SK-N-SH (cell line): ENCODE measurements at regions of chr2 and their contacts with region 1.

Region 1: GRCh38 chr2:55175254-55176025 is 56.7 kb downstream of the CLHC1 start:
- DNase-seq: peak; percentile 45
- H3K4me3 ChIP-seq: no peak overlapping the region
- H3K27ac ChIP-seq: no peak overlapping the region
- H3K4me1 ChIP-seq: peaks cover 0 to 3% of the 10 kb centered on the region in 2 experiments; a peak in 3 of 4 replicates
- H3K27me3 ChIP-seq: no peaks in the 10 kb centered on the region
- CTCF ChIP-seq: peak; percentile 77
- EP300 ChIP-seq: no peak
- RAD21 ChIP-seq: peak; percentile 84

Region 2: DNA sequence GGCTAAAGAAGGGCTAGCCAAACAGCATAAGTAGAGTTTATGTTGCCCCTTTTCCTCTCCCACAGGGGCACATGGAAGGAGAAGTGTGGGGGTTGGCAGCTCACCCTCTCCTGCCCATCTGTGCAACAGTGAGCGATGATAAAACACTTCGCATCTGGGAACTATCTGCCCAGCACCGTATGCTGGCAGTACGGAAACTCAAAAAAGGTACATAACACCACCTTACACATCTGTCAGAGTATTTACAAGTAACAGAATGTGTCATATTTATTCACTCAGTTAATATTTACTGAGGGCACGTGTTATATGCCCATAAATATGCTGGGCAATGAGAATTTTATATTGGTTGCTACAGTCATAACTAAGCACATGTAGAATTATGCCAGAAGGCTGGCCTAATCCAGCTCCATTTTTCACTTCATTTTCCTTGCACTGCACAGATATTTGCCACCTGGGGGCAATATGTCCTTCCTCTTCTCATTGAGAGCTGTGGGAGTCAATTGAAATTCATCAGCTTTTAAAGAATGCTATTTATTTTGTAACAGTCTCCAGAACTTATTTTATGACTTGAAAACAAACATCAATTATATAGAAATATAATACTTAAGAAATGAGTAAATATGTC is 275.8 kb before region 1 on chr2:
- CTCF ChIA-PET with region 1: interaction called, 35 read pairs
- POLR2A ChIA-PET with region 1: no interaction called
- DNase-seq: peak; percentile 27
- H3K4me3 ChIP-seq: no peak overlapping the region
- H3K27ac ChIP-seq: no peak overlapping the region
- H3K4me1 ChIP-seq: peaks cover 13 to 14% of the 10 kb centered on the region in 2 experiments
- H3K27me3 ChIP-seq: no peaks in the 10 kb centered on the region
- CTCF ChIP-seq: peak; percentile 76
- EP300 ChIP-seq: no peak
- RAD21 ChIP-seq: peak; percentile 74